Aorta (tissue), 5 donors: ENCODE measurements at regions of chr19 and their contacts with region 1.

Region 1: DNA sequence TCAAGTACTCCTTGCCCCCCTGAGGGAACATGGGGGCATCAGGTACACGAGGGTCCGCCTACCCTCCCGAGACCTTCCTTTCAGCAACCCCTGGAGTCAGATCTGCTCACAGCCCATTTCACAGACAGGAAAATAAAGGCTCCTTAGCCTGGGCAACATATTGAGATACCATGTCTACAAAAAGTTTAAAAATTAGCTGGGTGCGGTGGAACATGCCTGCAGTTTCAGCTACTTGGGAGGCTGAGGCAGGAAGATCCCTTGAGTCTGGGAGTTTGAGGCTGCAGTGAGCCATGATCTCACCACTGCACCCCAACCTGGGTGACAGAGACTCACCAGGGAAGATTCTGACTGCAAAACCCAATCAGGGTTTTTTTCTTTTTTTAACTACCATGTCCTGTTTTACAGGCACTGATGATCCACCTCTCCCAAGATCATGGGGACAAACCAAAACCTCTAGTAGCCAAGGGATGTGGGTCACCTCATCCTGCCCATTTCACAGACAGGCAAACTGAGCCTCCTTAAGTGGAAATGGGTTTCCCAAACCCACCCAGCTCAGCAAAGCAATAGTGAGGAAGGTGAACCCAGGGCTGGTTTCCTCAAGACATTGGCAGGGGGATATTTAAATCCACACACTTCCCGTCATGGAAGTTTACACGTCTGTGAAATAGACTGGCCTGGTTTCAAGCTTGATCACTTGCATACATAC is 6.4 kb upstream of the CDKN2D start:
- DNase-seq: no peak
- ATAC-seq: no peak
- H3K4me3 ChIP-seq: no peak overlapping the region
- H3K27ac ChIP-seq: no peak overlapping the region
- H3K4me1 ChIP-seq: no peaks in the 10 kb centered on the region
- H3K27me3 ChIP-seq: no peaks in the 10 kb centered on the region

Region 2: DNA sequence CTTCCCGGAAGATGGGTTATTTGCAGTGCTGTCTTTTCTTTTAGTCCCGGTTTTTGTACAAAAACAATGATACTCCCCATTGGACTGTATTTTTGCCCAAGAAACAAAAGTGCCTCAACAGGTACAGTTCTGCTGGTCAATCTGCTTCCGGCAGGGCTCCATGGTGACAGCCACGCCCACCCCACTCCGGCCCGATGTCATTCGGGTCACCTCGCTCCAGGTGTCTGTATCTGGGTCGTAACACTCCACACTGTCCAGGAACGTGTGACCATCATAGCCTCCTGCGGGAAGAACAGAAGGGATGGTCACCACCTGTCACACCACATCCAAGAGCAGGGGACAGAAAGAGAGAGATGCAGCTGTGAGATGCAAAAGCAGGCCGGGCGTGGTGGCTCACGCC is 88.6 kb before region 1 on chr19:
- intact Hi-C with region 1: loop called in 1 of 2 experiments (anchors 5 kb)
- DNase-seq: no peak
- ATAC-seq: no peak
- H3K4me3 ChIP-seq: no peak overlapping the region
- H3K27ac ChIP-seq: no peak overlapping the region
- H3K4me1 ChIP-seq: no peaks in the 10 kb centered on the region
- H3K27me3 ChIP-seq: no peaks in the 10 kb centered on the region